Endothelial cell of umbilical vein (primary cell): ENCODE measurements at regions of chr20 and their contacts with region 1.

Region 1: GRCh38 chr20:59525500-59526241 is 78.7 kb upstream of the PHACTR3 start:
- DNase-seq: peak; percentile 52
- H3K4me3 ChIP-seq: no peak overlapping the region
- H3K27ac ChIP-seq: no peak overlapping the region
- H3K4me1 ChIP-seq: no peaks in the 10 kb centered on the region
- H3K27me3 ChIP-seq: no peaks in the 10 kb centered on the region
- CTCF ChIP-seq: peak; percentile 73 to 89
- POLR2A ChIP-seq: no peak

Region 2: GRCh38 chr20:59515014-59515905 is 10.4 kb before region 1 on chr20:
- CTCF ChIA-PET with region 1: interaction called, 5 read pairs
- POLR2A ChIA-PET with region 1: no interaction called
- dilution Hi-C with region 1: no loop called
- intact Hi-C with region 1: loop called (anchors 1 kb)
- DNase-seq: peak; percentile 61
- H3K4me3 ChIP-seq: no peak overlapping the region
- H3K27ac ChIP-seq: no peak overlapping the region
- H3K4me1 ChIP-seq: no peaks in the 10 kb centered on the region
- H3K27me3 ChIP-seq: no peaks in the 10 kb centered on the region
- CTCF ChIP-seq: peak; percentile 70 to 87
- POLR2A ChIP-seq: no peak

Region 3: GRCh38 chr20:60224914-60225313 is 699.2 kb after region 1 on chr20:
- CTCF ChIA-PET with region 1: no interaction called
- POLR2A ChIA-PET with region 1: no interaction called
- dilution Hi-C with region 1: no loop called
- intact Hi-C with region 1: no loop called
- DNase-seq: no peak
- H3K4me3 ChIP-seq: no peak overlapping the region
- H3K27ac ChIP-seq: no peak overlapping the region
- H3K4me1 ChIP-seq: no peaks in the 10 kb centered on the region
- H3K27me3 ChIP-seq: no peaks in the 10 kb centered on the region
- CTCF ChIP-seq: no peak
- POLR2A ChIP-seq: no peak